Esophagus muscularis mucosa (tissue), 4 donors: ENCODE measurements at regions of chr10 and their contacts with region 1.

Region 1: GRCh38 chr10:71893920-71894319 is 42.9 kb upstream of the PSAP start:
- DNase-seq: no peak
- H3K4me3 ChIP-seq: no peak overlapping the region
- H3K27ac ChIP-seq: no peak overlapping the region
- H3K4me1 ChIP-seq: peaks cover 9 to 17% (median 14%) of the 10 kb centered on the region in 4 donors
- H3K27me3 ChIP-seq: no peaks in the 10 kb centered on the region
- CTCF ChIP-seq: no peak
- EP300 ChIP-seq: no peak
- POLR2A ChIP-seq: no peak

Region 2: GRCh38 chr10:71371750-71372166 is 522.2 kb before region 1 on chr10:
- intact Hi-C with region 1: loop called (anchors 10 kb)
- DNase-seq: no peak
- H3K4me3 ChIP-seq: no peak overlapping the region
- H3K27ac ChIP-seq: no peak overlapping the region
- H3K4me1 ChIP-seq: peaks cover 0 to 4% (median 4%) of the 10 kb centered on the region in 4 donors
- H3K27me3 ChIP-seq: peaks cover 0 to 11% (median 0%) of the 10 kb centered on the region in 4 donors
- CTCF ChIP-seq: no peak
- EP300 ChIP-seq: no peak
- POLR2A ChIP-seq: no peak

Region 3: DNA sequence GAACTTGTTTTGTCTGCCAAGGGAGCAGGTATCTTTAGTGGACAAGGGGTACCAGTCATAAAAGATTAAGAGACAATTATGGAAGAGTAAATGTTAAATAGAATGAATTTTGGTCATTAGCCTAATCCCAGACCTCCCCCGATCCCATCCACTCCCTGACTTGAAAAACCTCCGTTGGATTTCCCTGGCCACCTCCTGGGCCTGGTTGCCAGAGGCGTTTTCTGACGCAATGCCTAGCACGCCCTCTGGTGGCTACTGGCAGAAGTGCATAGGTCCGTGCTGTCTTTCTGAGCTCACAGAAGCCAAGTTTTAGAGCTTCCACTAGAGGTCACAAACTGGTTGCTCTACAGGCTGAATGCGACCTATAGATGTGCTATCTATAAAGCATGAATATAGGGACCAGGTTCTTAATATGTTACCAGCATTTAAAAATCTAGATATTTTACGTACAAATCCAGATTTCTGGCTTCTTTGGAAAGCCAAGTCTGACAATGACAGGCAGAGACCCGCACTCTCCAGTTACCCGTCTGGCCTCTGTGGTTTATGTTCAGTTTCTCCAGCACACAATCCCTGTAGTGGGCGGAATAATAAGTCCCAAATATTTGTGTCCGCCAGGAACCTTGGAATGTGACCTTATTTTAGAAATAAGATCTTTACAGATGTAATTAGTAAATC is 154.7 kb after region 1 on chr10:
- intact Hi-C with region 1: loop called (anchors 2 kb)
- DNase-seq: peak; percentile 98
- H3K4me3 ChIP-seq: no peak overlapping the region
- H3K27ac ChIP-seq: no peak overlapping the region
- H3K4me1 ChIP-seq: peaks cover 0 to 10% (median 2%) of the 10 kb centered on the region in 4 donors
- H3K27me3 ChIP-seq: no peaks in the 10 kb centered on the region
- CTCF ChIP-seq: peak; percentile 99 to 100 (median 100)
- EP300 ChIP-seq: no peak
- POLR2A ChIP-seq: no peak